GM10248 (cell line): ENCODE measurements at regions of chr11 and their contacts with region 1.

Region 1: DNA sequence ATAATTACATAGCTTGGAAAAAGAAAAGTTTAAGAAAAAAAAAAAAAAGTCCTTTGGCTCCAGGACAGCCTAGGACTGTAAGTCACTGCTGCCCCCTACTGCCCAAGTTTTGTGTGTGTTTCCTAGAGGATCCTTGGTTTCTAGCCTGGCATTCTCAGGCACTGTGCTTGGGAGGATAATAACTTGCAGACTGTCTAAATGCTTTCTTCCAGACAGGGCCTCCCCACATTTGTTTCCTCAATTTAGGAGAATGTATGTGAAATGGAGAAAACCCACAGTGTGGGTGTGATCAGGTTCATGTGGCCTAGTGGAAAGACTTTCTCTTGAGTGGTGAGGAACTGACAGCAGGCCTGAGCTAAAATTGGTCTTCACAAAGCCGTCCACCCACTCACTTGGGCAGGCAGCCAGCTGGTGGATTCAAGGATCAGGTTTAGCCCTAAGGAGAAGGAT is 191.0 kb downstream of the NAV2 start:
- DNase-seq: peak; percentile 47
- CTCF ChIP-seq: peak; percentile 67

Region 2: DNA sequence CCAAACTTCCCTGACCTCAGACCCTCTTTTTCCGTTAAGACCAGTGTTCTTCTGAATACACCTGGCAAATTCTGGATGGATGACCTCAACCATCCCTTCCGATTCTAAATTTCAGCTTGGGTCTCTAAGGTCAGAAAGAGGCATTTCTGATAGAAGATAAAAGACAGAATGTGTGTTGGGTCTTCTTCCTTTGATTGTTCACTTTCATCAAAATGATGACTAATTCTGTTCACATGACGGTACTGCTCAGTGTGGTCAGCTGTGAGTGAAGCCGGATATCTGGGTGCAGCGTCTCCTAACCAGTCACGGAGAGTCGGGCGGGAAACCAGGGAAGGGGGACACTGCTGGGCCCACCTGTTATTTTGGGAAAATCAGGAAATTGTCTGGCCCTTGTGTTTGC is 342.6 kb before region 1 on chr11:
- CTCF ChIA-PET with region 1: interaction called, 66 read pairs
- POLR2A ChIA-PET with region 1: no interaction called
- DNase-seq: no peak
- CTCF ChIP-seq: no peak

Region 3: GRCh38 chr11:19566583-19567379 is 336.9 kb before region 1 on chr11:
- CTCF ChIA-PET with region 1: interaction called, 63 read pairs
- POLR2A ChIA-PET with region 1: no interaction called
- DNase-seq: no peak
- CTCF ChIP-seq: no peak

Region 4: GRCh38 chr11:19889531-19889930 is 14.1 kb before region 1 on chr11:
- CTCF ChIA-PET with region 1: interaction called, 12 read pairs
- POLR2A ChIA-PET with region 1: no interaction called
- DNase-seq: no peak
- CTCF ChIP-seq: no peak

Region 5: DNA sequence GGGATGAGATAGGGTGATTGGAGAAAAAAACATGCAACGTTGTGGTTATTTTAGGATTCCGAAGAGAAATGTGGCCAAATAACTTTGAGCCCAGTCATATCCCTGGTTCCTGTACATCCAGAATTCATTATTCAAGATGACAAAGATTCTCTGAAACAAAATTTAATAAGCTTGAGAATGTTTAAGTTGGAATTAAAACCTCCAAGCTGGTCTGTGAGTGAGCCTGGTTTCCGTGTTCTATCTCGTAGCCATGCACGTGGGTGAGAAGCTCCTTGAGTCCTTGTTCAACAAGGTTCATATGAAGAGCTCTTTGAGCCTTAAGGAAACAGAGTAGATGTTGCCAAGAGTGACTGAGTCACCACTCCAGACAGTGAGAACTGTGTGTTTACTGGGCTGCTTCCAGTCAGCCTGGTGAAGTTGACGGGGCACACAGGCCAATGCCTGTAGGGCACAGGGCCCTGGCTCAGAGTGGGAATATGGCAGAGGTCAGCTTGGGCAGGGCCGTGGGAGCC is 15.5 kb after region 1 on chr11:
- CTCF ChIA-PET with region 1: interaction called, 19 read pairs
- POLR2A ChIA-PET with region 1: no interaction called
- DNase-seq: no peak
- CTCF ChIP-seq: no peak